HAP-1 (cell line): ENCODE measurements at regions of chr3 and their contacts with region 1.

Region 1: DNA sequence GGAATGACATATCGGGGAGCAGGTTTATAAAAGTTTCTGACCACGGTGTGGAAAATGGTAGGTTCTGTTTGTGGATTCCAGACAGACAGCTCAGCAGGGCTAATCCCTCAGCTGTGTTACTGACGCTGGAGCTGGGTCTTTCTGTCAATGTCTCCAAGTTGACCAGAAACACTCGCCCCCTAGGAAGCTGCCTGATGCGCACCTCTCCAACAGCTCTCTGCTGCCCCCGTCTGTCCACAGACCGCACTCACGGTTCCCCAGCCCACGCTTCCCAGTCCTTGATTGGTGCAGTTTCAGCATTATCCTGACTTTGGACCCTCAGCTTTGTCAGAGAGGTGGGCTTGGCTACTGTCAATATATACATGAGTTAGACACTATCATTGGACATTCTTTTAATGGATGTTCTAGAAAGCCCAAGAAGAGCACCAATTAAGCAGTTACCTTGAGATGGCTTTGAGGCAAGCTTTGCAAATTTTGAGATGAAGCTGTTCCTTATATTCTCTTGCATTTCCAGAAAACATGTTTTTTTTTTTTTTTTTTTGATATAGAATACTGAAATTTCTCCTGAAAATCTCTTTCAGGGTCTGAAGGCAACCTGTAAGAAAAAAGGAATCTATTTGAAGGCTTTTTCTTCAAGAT is 98.9 kb upstream of the TBC1D5 start:
- DNase-seq: peak; percentile 70 to 93
- H3K4me3 ChIP-seq: no peak overlapping the region
- H3K4me1 ChIP-seq: peaks cover 13% of the 10 kb centered on the region
- H3K27me3 ChIP-seq: no peaks in the 10 kb centered on the region

Region 2: DNA sequence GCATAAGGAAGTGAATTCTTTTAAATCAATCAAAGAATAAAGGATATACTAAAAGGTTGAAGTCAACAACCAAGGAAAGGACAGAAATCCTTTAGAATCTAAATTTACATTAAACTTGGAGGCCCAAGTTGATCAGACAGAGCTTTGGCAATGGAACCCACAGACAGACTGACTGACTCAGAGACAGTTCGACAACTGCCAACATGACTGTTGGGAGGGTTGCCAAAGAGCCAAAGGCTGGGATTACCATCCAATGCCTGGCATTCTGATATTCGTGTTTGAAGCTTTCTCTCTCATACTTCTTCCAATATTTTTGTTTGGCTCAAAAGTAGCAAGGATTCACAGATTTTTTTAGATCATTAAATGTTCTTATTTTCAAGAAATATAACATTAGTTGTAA is 550.4 kb before region 1 on chr3:
- in situ Hi-C with region 1: loop called (anchors 25 kb)
- DNase-seq: no peak
- H3K4me3 ChIP-seq: no peak overlapping the region
- H3K4me1 ChIP-seq: no peaks in the 10 kb centered on the region
- H3K27me3 ChIP-seq: no peaks in the 10 kb centered on the region

Region 3: DNA sequence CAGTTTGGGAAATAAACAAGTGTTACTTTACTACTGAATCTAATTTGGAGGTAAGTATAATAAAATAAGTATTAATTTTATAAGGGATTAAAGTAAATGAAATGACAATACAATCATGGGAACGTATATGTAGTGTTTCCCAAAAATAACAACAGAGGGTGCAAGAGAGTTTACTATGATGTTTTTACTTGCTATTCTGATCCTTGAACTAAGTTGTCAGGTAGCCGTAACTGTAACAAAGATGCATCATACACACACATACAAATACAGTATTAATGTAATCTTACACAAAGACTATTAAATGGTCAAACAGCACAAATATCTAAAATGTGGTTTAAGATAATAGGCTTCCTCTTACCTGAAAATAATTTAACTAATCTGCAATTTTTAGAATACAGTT is 410.3 kb before region 1 on chr3:
- in situ Hi-C with region 1: loop called (anchors 25 kb)
- DNase-seq: peak in 1 of 2 experiments; percentile 67
- H3K4me3 ChIP-seq: no peak overlapping the region
- H3K4me1 ChIP-seq: peaks cover 24% of the 10 kb centered on the region
- H3K27me3 ChIP-seq: no peaks in the 10 kb centered on the region

Region 4: GRCh38 chr3:17592956-17593355 is 248.4 kb before region 1 on chr3:
- in situ Hi-C with region 1: no loop called
- DNase-seq: no peak
- H3K4me3 ChIP-seq: no peak overlapping the region
- H3K4me1 ChIP-seq: no peaks in the 10 kb centered on the region
- H3K27me3 ChIP-seq: no peaks in the 10 kb centered on the region

Region 5: DNA sequence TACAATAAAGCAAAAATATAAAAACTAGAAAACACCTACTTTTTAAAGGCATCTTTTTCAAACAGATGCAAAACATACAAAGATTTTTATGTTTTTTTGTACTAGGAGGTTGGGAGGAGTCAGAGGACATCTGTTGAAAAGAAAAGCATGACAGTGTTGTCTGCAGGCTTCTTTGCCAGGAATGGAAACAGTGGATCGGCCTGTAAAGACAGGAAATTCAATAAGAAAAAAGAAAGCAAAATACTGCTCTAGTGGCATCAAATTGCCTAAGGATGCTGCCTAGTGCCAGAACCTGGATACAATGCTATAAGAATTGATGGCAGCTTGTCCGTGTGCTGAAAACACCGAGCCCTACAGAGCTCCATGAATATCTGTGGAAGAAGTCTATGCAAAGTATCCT is 168.8 kb before region 1 on chr3:
- in situ Hi-C with region 1: loop called (anchors 25 kb)
- DNase-seq: no peak
- H3K4me3 ChIP-seq: no peak overlapping the region
- H3K4me1 ChIP-seq: no peaks in the 10 kb centered on the region
- H3K27me3 ChIP-seq: no peaks in the 10 kb centered on the region